ENCODE measurements at regions of chrX and their contacts with region 1.

Region 1: GRCh38 chrX:12894074-12895030 is 12.1 kb upstream of the TLR8 start:
- DNase-seq: peak; percentile 35
- CTCF ChIP-seq: peak; percentile 64

Region 2: GRCh38 chrX:12824944-12825343 is 69.4 kb before region 1 on chrX:
- in situ Hi-C with region 1: loop called (anchors 5 kb)
- DNase-seq: no peak
- CTCF ChIP-seq: no peak